AG04450 (cell line): ENCODE measurements at regions of chr14 and their contacts with region 1.

Region 1: DNA sequence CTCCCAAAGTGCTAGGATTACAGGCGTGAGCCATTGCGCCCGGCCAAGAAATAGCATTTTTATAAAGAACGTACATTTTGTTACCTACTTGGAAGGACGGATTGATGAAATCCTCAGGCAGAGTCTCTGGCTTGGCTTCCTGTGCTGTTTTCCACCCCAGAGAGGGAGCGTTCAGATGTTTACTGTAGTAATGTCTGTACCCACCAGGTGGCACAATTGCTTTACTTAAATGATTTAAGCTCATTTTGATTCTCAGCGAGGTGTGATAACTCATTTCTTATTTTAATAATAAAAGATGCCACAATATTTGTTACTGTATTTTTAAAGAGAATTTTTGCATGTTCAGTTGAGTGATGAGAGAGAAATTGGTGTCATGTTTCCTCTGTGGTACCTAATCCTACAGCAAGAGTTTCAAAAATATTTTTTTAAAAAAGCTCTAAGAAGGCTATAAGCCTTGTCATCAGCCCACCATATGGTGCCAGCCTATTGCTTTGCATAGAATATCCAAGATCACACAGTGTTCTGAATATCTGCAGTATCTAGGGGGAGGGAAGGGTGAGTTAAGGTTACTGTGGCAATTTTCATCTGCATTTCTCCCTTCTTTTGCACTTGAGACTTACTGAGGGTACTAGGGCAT is 82.6 kb upstream of the TRAF3 start:
- DNase-seq: peak; percentile 20
- H3K4me3 ChIP-seq: no peak overlapping the region
- H3K27ac ChIP-seq: no peak overlapping the region
- H3K27me3 ChIP-seq: no peaks in the 10 kb centered on the region
- CTCF ChIP-seq: peak; percentile 64

Region 2: GRCh38 chr14:102524466-102525218 is 170.0 kb before region 1 on chr14:
- CTCF ChIA-PET with region 1: interaction called, 14 read pairs
- POLR2A ChIA-PET with region 1: interaction called, 9 read pairs
- DNase-seq: peak; percentile 95
- H3K4me3 ChIP-seq: peak overlapping the region; percentile 65
- H3K27ac ChIP-seq: peak overlapping the region; percentile 61
- H3K27me3 ChIP-seq: no peaks in the 10 kb centered on the region
- CTCF ChIP-seq: peak; percentile 94

Region 3: GRCh38 chr14:102645746-102646440 is 48.8 kb before region 1 on chr14:
- CTCF ChIA-PET with region 1: no interaction called
- POLR2A ChIA-PET with region 1: no interaction called
- DNase-seq: no peak
- H3K4me3 ChIP-seq: no peak overlapping the region
- H3K27ac ChIP-seq: no peak overlapping the region
- H3K27me3 ChIP-seq: no peaks in the 10 kb centered on the region
- CTCF ChIP-seq: no peak

Region 4: GRCh38 chr14:102708494-102708893 is 13.8 kb after region 1 on chr14:
- CTCF ChIA-PET with region 1: interaction called, 27 read pairs
- POLR2A ChIA-PET with region 1: no interaction called
- DNase-seq: no peak
- H3K4me3 ChIP-seq: no peak overlapping the region
- H3K27ac ChIP-seq: no peak overlapping the region
- H3K27me3 ChIP-seq: no peaks in the 10 kb centered on the region
- CTCF ChIP-seq: no peak

Region 5: GRCh38 chr14:102917469-102918211 is 223.0 kb after region 1 on chr14:
- CTCF ChIA-PET with region 1: interaction called, 25 read pairs
- POLR2A ChIA-PET with region 1: no interaction called
- DNase-seq: no peak
- H3K4me3 ChIP-seq: no peak overlapping the region
- H3K27ac ChIP-seq: no peak overlapping the region
- H3K27me3 ChIP-seq: peaks cover 11% of the 10 kb centered on the region
- CTCF ChIP-seq: peak; percentile 73